A673 (cell line): ENCODE measurements at regions of chr14 and their contacts with region 1.

Region 1: GRCh38 chr14:31926123-31926522 is 151.0 kb upstream of the ARHGAP5 start:
- DNase-seq: peak; percentile 63
- H3K4me3 ChIP-seq: no peak overlapping the region
- H3K27ac ChIP-seq: no peak overlapping the region
- H3K4me1 ChIP-seq: peaks cover 11% of the 10 kb centered on the region
- H3K27me3 ChIP-seq: no peaks in the 10 kb centered on the region
- CTCF ChIP-seq: peak; percentile 73

Region 2: DNA sequence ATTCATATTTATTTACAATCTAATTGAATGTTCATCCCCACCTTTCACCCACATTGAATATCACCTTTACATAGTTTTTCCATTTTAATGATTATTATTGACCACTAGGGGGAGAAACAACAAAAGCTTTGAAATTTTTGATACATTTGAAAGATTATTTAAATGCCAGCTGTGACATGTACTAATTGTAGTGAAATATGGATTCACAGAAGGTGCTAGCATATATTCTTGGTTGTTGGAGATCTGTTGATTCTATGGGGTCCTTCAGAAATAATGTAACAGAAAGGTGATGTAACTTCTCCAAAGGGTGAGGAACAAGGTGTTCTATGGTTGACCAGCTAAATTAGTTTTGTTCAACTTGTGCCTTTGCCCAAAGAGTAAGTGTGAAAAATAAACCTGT is 415.9 kb before region 1 on chr14:
- CTCF ChIA-PET with region 1: no interaction called
- POLR2A ChIA-PET with region 1: no interaction called
- intact Hi-C with region 1: loop called (anchors 5 kb)
- DNase-seq: peak; percentile 38
- H3K4me3 ChIP-seq: no peak overlapping the region
- H3K27ac ChIP-seq: no peak overlapping the region
- H3K4me1 ChIP-seq: no peaks in the 10 kb centered on the region
- H3K27me3 ChIP-seq: no peaks in the 10 kb centered on the region
- CTCF ChIP-seq: peak; percentile 73

Region 3: GRCh38 chr14:31968956-31969698 is 43.0 kb after region 1 on chr14:
- CTCF ChIA-PET with region 1: no interaction called
- POLR2A ChIA-PET with region 1: interaction called, 28 read pairs
- intact Hi-C with region 1: no loop called
- DNase-seq: no peak
- H3K4me3 ChIP-seq: no peak overlapping the region
- H3K27ac ChIP-seq: no peak overlapping the region
- H3K4me1 ChIP-seq: no peaks in the 10 kb centered on the region
- H3K27me3 ChIP-seq: no peaks in the 10 kb centered on the region
- CTCF ChIP-seq: no peak

Region 4: GRCh38 chr14:32469388-32470160 is 543.5 kb after region 1 on chr14:
- CTCF ChIA-PET with region 1: no interaction called
- POLR2A ChIA-PET with region 1: no interaction called
- intact Hi-C with region 1: loop called (anchors 5 kb)
- DNase-seq: peak; percentile 57
- H3K4me3 ChIP-seq: no peak overlapping the region
- H3K27ac ChIP-seq: no peak overlapping the region
- H3K4me1 ChIP-seq: peaks cover 11% of the 10 kb centered on the region
- H3K27me3 ChIP-seq: no peaks in the 10 kb centered on the region
- CTCF ChIP-seq: peak; percentile 69

Region 5: GRCh38 chr14:32560209-32560857 is 634.2 kb after region 1 on chr14:
- CTCF ChIA-PET with region 1: no interaction called
- POLR2A ChIA-PET with region 1: no interaction called
- intact Hi-C with region 1: loop called (anchors 5 kb)
- DNase-seq: peak; percentile 79
- H3K4me3 ChIP-seq: no peak overlapping the region
- H3K27ac ChIP-seq: no peak overlapping the region
- H3K4me1 ChIP-seq: peaks cover 16% of the 10 kb centered on the region
- H3K27me3 ChIP-seq: no peaks in the 10 kb centered on the region
- CTCF ChIP-seq: peak; percentile 95